ENCODE measurements at regions of chr11 and their contacts with region 1.

Region 1: GRCh38 chr11:46700241-46701077 is at the starts of genes ARHGAP1 and ZNF408:
- DNase-seq: peak; percentile 99
- ATAC-seq: peak; percentile 88 to 92
- H3K4me3 ChIP-seq: peak within 1 kb of the TSS; percentile 70 to 99 (median 93)
- H3K27ac ChIP-seq: peak within 1 kb of the TSS; percentile 88 to 100 (median 94)
- H3K4me1 ChIP-seq: peaks cover 60 to 62% of the 10 kb centered on the region in 2 donors
- H3K27me3 ChIP-seq: no peaks in the 10 kb centered on the region
- CTCF ChIP-seq: no peak
- POLR2A ChIP-seq: peak; percentile 88 to 90
- total RNA-seq, gene ARHGAP1: 11.1 to 34.8 (median 24.6) TPM
- total RNA-seq, gene ZNF408: 17.7 to 25.2 (median 19.3) TPM

Region 2: GRCh38 chr11:46361283-46362155 is 338.9 kb before region 1 on chr11:
- in situ Hi-C with region 1: no loop called
- intact Hi-C with region 1: loop called (anchors 5 kb)
- DNase-seq: peak; percentile 85 to 94
- ATAC-seq: peak; percentile 69 to 74
- H3K4me3 ChIP-seq: peak overlapping the region; percentile 67 to 77 (median 74)
- H3K27ac ChIP-seq: peak overlapping the region; percentile 98 to 100 (median 98)
- H3K4me1 ChIP-seq: peaks cover 60 to 61% of the 10 kb centered on the region in 2 donors
- H3K27me3 ChIP-seq: no peaks in the 10 kb centered on the region
- CTCF ChIP-seq: peak in 1 of 5 experiments; percentile 10
- POLR2A ChIP-seq: peak; percentile 94 to 96

Region 3: GRCh38 chr11:46649180-46649738 is 51.2 kb before region 1 on chr11:
- in situ Hi-C with region 1: no loop called
- intact Hi-C with region 1: no loop called
- DNase-seq: peak; percentile 69 to 81
- ATAC-seq: peak; percentile 96 to 97
- H3K4me3 ChIP-seq: no peak overlapping the region
- H3K27ac ChIP-seq: peak overlapping the region; percentile 58 to 75 (median 66)
- H3K4me1 ChIP-seq: peaks cover 5 to 13% of the 10 kb centered on the region in 2 donors
- H3K27me3 ChIP-seq: no peaks in the 10 kb centered on the region
- CTCF ChIP-seq: no peak
- POLR2A ChIP-seq: peak in 1 of 2 donors; percentile 21

Region 4: GRCh38 chr11:46675288-46675851 is 25.1 kb before region 1 on chr11:
- in situ Hi-C with region 1: no loop called
- intact Hi-C with region 1: loop called (anchors 2 kb)
- DNase-seq: peak; percentile 74 to 84
- ATAC-seq: peak; percentile 82 to 84
- H3K4me3 ChIP-seq: no peak overlapping the region
- H3K27ac ChIP-seq: peak overlapping the region; percentile 85 to 92 (median 88)
- H3K4me1 ChIP-seq: peaks cover 22 to 34% of the 10 kb centered on the region in 2 donors
- H3K27me3 ChIP-seq: no peaks in the 10 kb centered on the region
- CTCF ChIP-seq: no peak
- POLR2A ChIP-seq: peak in 1 of 2 donors; percentile 37